Activated CD8-positive, alpha-beta T cell treated with anti-CD3 and anti-CD28 coated beads for 36 hours (primary cell): ENCODE measurements at regions of chr2 and their contacts with region 1.

Region 1: DNA sequence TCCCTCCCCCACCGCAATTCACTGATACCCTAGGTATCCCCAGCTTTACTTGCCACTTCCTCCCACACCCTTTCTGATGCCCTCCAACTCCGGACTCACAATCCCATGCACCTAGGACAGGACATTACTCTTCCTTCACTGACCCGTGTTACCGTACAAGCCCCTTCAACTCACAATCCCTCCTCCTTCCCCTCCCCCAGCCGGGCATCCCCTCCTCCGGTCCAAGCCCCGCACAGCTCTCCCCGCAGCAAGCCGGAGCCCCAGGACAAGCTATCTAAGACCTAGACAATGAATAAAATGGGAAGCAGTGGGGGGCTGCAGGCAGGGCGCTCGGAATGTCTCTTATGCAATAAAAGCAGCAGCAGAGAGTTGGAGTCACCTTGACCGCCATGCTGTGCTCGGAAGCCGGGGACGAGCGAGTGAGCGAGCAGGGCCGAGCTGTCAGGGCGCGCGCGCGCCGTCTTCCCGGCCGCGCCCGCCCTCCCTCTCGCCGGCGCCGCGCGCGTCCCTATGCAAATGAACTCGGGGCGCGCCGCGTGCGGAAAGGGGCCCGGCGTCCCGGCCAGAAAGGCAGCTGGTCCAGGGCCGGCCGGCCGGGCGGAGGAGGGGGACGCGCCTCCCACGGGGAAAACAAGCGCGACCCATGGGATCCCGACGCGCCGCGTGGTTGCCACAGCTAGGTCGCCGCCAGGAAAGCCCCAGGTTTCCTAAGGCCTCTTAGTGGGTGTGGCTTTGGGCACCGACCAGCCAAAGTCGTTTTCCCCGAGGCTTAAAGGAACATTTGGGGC is at the start of gene SLC25A12:
- DNase-seq: peak; percentile 80
- ATAC-seq: peak; percentile 96
- H3K4me3 Mint-ChIP-seq: peak within 1 kb of the TSS; percentile 99
- H3K27ac Mint-ChIP-seq: peak within 1 kb of the TSS; percentile 93
- H3K4me1 Mint-ChIP-seq: peaks cover 34% of the 10 kb centered on the region
- H3K27me3 Mint-ChIP-seq: peaks cover 3% of the 10 kb centered on the region
- CTCF ChIP-seq: no peak
- total RNA-seq, gene SLC25A12: 16.2 to 18.3 TPM

Region 2: GRCh38 chr2:171882089-171882769 is 11.8 kb before region 1 on chr2:
- CTCF ChIA-PET with region 1: no interaction called
- POLR2A ChIA-PET with region 1: interaction called, 20 read pairs
- intact Hi-C with region 1: no loop called
- DNase-seq: no peak
- ATAC-seq: peak; percentile 62
- H3K4me3 Mint-ChIP-seq: no peak overlapping the region
- H3K27ac Mint-ChIP-seq: no peak overlapping the region
- H3K4me1 Mint-ChIP-seq: peaks cover 25% of the 10 kb centered on the region
- H3K27me3 Mint-ChIP-seq: no peaks in the 10 kb centered on the region
- CTCF ChIP-seq: no peak

Region 3: GRCh38 chr2:171922230-171923022 is 28.4 kb after region 1 on chr2 and contains the start of gene HAT1:
- CTCF ChIA-PET with region 1: no interaction called
- POLR2A ChIA-PET with region 1: interaction called, 11 read pairs
- intact Hi-C with region 1: no loop called
- DNase-seq: peak; percentile 99
- ATAC-seq: peak; percentile 97
- H3K4me3 Mint-ChIP-seq: peak within 1 kb of the TSS; percentile 91
- H3K27ac Mint-ChIP-seq: peak within 1 kb of the TSS; percentile 95
- H3K4me1 Mint-ChIP-seq: peaks cover 34% of the 10 kb centered on the region
- H3K27me3 Mint-ChIP-seq: no peaks in the 10 kb centered on the region
- CTCF ChIP-seq: no peak
- total RNA-seq, gene HAT1: 75.2 to 79.4 TPM